A673 (cell line): ENCODE measurements at regions of chr6 and their contacts with region 1.

Region 1: GRCh38 chr6:134707342-134708031 is 242.4 kb downstream of the ALDH8A1 start:
- DNase-seq: peak; percentile 41
- H3K4me3 ChIP-seq: no peak overlapping the region
- H3K27ac ChIP-seq: no peak overlapping the region
- H3K4me1 ChIP-seq: peaks cover 13% of the 10 kb centered on the region
- H3K27me3 ChIP-seq: no peaks in the 10 kb centered on the region
- CTCF ChIP-seq: no peak

Region 2: GRCh38 chr6:134550604-134551003 is 156.9 kb before region 1 on chr6:
- CTCF ChIA-PET with region 1: no interaction called
- POLR2A ChIA-PET with region 1: no interaction called
- intact Hi-C with region 1: no loop called
- DNase-seq: no peak
- H3K4me3 ChIP-seq: no peak overlapping the region
- H3K27ac ChIP-seq: no peak overlapping the region
- H3K4me1 ChIP-seq: peaks cover 8% of the 10 kb centered on the region
- H3K27me3 ChIP-seq: no peaks in the 10 kb centered on the region
- CTCF ChIP-seq: no peak

Region 3: GRCh38 chr6:134689641-134690040 is 17.8 kb before region 1 on chr6:
- CTCF ChIA-PET with region 1: no interaction called
- POLR2A ChIA-PET with region 1: interaction called, 23 read pairs
- intact Hi-C with region 1: no loop called
- DNase-seq: no peak
- H3K4me3 ChIP-seq: no peak overlapping the region
- H3K27ac ChIP-seq: no peak overlapping the region
- H3K4me1 ChIP-seq: peaks cover 3% of the 10 kb centered on the region
- H3K27me3 ChIP-seq: peaks cover 8% of the 10 kb centered on the region
- CTCF ChIP-seq: no peak